ENCODE measurements at regions of chr3 and their contacts with region 1.

Region 1: DNA sequence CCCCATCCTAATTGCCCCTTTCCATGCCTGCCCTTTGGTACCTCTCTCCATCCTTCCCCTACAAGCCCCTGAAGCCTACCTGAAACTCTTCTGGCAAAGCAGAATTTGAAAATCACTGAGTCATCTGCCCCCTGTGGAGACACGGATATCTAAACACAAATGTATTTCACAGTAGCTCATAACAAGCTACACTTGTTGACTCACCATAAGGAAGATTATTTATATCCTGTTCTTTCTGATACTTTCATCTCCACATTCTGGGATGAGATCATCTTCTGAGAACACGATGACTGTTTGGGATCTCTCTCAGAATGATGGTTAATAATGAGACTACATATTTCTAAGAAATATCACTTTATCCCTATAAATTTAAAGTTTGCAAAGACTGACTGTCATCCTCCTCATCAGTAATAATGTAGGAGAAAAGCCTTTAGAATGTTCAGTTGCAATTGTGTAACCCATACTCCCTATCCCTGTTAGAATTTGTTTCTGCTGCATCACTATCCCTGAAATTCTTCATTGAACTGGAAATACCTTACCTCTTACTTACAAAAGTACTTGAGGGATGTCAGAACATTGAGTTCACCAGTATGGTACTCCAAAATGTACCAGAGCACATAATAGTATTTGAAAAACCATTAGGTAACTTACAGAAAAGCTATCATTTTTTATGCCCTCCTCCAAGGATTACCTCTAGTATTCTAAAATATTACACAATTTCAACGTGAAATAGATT is 116.1 kb upstream of the IL12A start:
- DNase-seq: peak; percentile 85
- H3K4me3 ChIP-seq: no peak overlapping the region
- H3K27ac ChIP-seq: peak overlapping the region; percentile 92
- H3K4me1 ChIP-seq: peaks cover 19% of the 10 kb centered on the region
- H3K27me3 ChIP-seq: no peaks in the 10 kb centered on the region
- CTCF ChIP-seq: peak; percentile 12 to 25
- POLR2A ChIP-seq: no peak

Region 2: GRCh38 chr3:159852821-159853505 is 19.6 kb before region 1 on chr3:
- CTCF ChIA-PET with region 1: interaction called, 36 read pairs
- POLR2A ChIA-PET with region 1: interaction called, 18 read pairs
- dilution Hi-C with region 1: no loop called
- intact Hi-C with region 1: loop called (anchors 1 kb)
- DNase-seq: peak; percentile 97
- H3K4me3 ChIP-seq: peak overlapping the region in 2 of 3 experiments; percentile 45 to 52
- H3K27ac ChIP-seq: peak overlapping the region; percentile 97
- H3K4me1 ChIP-seq: peaks cover 70% of the 10 kb centered on the region
- H3K27me3 ChIP-seq: no peaks in the 10 kb centered on the region
- CTCF ChIP-seq: no peak
- POLR2A ChIP-seq: peak; percentile 2

Region 3: GRCh38 chr3:159861369-159861987 is 11.1 kb before region 1 on chr3:
- CTCF ChIA-PET with region 1: interaction called, 36 read pairs
- POLR2A ChIA-PET with region 1: interaction called, 5 read pairs
- dilution Hi-C with region 1: no loop called
- intact Hi-C with region 1: loop called (anchors 1 kb)
- DNase-seq: peak; percentile 71
- H3K4me3 ChIP-seq: no peak overlapping the region
- H3K27ac ChIP-seq: peak overlapping the region; percentile 85
- H3K4me1 ChIP-seq: peaks cover 61% of the 10 kb centered on the region
- H3K27me3 ChIP-seq: no peaks in the 10 kb centered on the region
- CTCF ChIP-seq: no peak
- POLR2A ChIP-seq: no peak

Measured in endothelial cell of umbilical vein (primary cell).